HEK293 (cell line): ENCODE measurements at regions of chr3 and their contacts with region 1.

Region 1: DNA sequence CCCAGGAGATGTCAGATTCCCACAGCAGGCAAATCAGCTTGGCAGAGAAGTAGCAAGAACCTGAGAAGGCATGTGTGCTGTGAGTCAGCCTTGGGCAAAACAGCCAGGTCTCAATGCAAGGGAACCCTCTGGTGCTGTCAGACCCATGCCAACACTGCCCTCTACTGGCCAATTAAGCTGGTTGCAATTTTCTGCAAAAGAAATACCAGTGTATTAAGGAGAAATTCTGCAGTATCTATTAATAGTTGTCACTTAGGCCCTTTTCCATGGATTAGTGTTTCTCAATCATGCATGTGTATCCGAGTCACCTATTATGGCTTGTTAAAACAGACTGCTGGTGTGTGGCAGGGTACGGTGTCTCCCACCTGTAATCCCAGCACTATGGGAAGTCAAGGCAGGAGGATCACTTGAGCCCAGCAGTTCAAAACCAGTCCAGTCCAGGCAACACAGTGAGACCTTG is 26.2 kb downstream of the MAP4 start:
- H3K4me3 ChIP-seq: no peak overlapping the region
- H3K27ac ChIP-seq: no peak overlapping the region
- H3K4me1 ChIP-seq: no peaks in the 10 kb centered on the region
- CTCF ChIP-seq: peak; percentile 70; the same call in 1 of the 2 replicates

Region 2: GRCh38 chr3:47824541-47825473 is 165.2 kb before region 1 on chr3:
- CTCF ChIA-PET with region 1: interaction called, 10 read pairs
- POLR2A ChIA-PET with region 1: no interaction called
- H3K4me3 ChIP-seq: peak overlapping the region; percentile 83
- H3K27ac ChIP-seq: peak overlapping the region; percentile 80
- H3K4me1 ChIP-seq: no peaks in the 10 kb centered on the region
- CTCF ChIP-seq: peak; percentile 75

Region 3: DNA sequence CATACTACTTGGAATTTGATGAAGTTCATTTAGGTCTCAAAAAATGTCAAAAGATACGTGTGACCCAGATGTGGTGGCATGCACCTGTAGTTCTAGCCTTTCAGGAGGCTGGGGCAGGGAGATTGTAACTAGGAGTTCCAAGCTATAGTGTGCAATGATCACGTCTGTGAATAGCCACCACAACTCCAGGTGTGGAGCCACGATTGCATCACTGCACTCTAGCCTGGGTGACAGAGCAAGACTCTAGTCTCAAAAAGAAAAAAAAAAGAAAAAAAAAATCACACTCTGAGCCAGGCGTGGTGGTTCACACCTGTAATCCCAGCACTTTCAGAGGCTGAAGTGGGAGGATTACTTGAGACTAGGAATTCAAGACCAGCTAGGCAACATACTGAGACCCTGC is 12.0 kb after region 1 on chr3:
- CTCF ChIA-PET with region 1: interaction called, 11 read pairs
- POLR2A ChIA-PET with region 1: no interaction called
- H3K4me3 ChIP-seq: no peak overlapping the region
- H3K27ac ChIP-seq: no peak overlapping the region
- H3K4me1 ChIP-seq: no peaks in the 10 kb centered on the region
- CTCF ChIP-seq: no peak

Region 4: DNA sequence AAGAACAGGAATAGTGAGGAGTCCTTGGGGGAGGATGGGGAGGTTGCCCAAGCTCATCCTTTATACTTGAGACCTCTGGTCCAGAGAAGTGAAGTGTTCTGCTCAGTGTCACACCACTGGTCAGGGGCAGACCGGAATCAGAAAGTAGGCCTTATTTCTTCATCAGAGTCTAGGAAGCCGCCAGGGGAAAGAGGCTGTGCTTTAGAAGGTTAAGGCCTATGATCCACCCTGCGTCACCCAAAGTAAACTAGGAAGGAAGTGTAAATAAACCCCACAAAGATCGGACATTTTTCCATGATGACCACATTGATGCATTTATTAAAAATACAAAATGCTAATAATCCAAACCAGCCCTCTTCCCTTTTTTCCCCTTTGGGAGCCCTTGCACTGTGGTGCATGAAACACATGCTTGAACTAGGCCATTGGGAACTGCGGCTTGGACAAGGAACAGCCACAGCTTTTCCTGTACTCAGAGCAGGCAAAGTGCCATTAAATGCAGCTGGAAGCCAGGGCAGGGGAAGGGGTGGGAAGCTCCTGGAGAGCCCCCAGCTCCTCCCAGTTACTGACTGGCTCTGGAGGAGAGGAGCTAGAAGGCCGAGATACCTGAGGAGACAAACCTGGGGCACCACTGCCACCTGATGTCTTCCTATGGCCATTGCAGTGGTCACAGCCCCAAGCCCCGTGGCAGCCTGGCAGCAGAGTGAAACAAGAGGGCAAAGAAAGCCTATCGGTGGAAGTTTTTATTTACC is 161.2 kb after region 1 on chr3:
- CTCF ChIA-PET with region 1: interaction called, 12 read pairs
- POLR2A ChIA-PET with region 1: no interaction called
- H3K4me3 ChIP-seq: no peak overlapping the region
- H3K27ac ChIP-seq: no peak overlapping the region
- H3K4me1 ChIP-seq: no peaks in the 10 kb centered on the region
- CTCF ChIP-seq: peak; percentile 79